ENCODE measurements at regions of chr2 and their contacts with region 1.

Region 1: GRCh38 chr2:24577481-24577880 is 86.4 kb downstream of the NCOA1 start:
- DNase-seq: no peak
- H3K4me3 ChIP-seq: no peak overlapping the region
- H3K27ac ChIP-seq: no peak overlapping the region
- H3K4me1 ChIP-seq: peaks cover 0 to 25% (median 4%) of the 10 kb centered on the region in 4 donors
- H3K27me3 ChIP-seq: no peaks in the 10 kb centered on the region
- CTCF ChIP-seq: no peak

Region 2: DNA sequence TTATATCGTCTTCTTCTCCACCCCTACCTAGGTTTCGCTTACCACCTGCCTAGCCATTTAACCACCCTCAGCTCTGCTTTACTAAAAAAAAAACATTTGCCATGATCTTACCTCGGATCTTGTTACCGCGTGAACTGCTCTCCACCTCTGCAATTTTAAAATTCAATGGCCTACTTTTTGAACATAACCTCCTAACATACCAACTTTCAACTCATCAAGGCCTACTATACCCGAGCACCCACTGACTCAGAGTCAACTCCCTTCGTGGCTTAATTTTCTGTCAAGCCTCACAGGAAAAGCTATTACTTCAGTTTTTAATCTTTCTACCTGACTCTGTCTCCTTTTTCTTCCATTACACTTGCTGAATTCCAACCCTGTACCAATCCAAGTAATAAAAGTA is 706.3 kb before region 1 on chr2:
- intact Hi-C with region 1: loop called (anchors 10 kb)
- DNase-seq: no peak
- H3K4me3 ChIP-seq: no peak overlapping the region
- H3K27ac ChIP-seq: no peak overlapping the region
- H3K4me1 ChIP-seq: no peaks in the 10 kb centered on the region
- H3K27me3 ChIP-seq: no peaks in the 10 kb centered on the region
- CTCF ChIP-seq: no peak

Measured in tibial artery (tissue), 4 donors.